H1 (cell line): ENCODE measurements at regions of chr17 and their contacts with region 1.

Region 1: DNA sequence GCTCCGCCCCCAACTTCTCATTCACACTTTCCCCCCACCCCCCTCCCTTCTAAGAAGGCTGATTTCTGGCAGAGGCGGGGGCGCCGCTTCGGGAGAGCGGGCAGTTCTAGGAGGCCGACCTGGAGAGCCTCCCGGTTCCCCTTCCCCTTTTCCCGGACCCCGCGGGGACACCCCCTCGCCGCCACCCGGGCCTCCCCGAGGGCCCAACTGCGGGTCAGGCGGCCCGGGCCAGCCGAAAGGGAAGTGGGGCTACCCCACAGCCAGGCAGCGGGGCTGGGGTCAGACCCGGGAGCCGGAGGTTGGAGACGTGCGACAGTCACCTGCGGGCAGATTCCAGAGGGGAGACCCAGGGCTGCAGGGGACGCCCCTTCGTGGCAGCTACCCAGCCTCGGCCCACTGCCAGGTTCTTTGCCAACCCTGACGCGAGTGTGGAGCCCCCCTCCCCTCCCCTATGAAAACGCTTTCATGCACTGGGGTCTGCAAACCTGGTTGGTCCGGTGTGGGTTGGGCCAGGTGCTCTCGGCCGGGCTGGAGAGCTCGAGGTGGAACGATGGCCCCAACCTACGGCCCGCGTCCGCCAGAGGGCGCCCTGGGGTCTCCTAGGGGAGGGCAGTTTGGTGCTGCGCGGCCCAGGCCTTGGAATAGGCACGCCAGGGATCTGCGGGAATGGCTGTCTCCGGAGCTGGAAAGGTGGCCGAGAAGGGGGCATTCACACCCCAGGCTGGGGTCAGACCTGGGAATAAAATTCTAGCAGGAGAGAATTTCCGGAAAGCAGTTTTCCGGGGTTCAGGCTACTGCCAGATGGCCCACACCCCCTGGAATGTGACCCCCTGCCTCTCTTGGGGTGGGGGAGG is 721 bp upstream of the SOCS3 start:
- DNase-seq: peak; percentile 73 to 100
- H3K4me3 ChIP-seq: peak overlapping the region; percentile 58 to 81 (median 65)
- H3K27ac ChIP-seq: peak overlapping the region; percentile 25; the same call in 1 of the 2 replicates
- H3K4me1 ChIP-seq: peaks cover 16 to 53% (median 41%) of the 10 kb centered on the region in 4 experiments
- H3K27me3 ChIP-seq: peaks cover 0 to 18% (median 5%) of the 10 kb centered on the region in 4 experiments; a peak in 4 of 7 replicates
- CTCF ChIP-seq: peak; percentile 90 to 98 (median 92)
- EP300 ChIP-seq: peak in 1 of 2 experiments; percentile 35; a peak in 1 of 3 replicates
- POLR2A ChIP-seq: no peak
- RAD21 ChIP-seq: peak; percentile 79 to 89

Region 2: GRCh38 chr17:78313735-78314648 is 46.6 kb before region 1 on chr17:
- CTCF ChIA-PET with region 1: interaction called, 11 read pairs
- POLR2A ChIA-PET with region 1: interaction called, 28 read pairs
- DNase-seq: peak; percentile 77 to 88
- H3K4me3 ChIP-seq: peak overlapping the region; percentile 26 to 67 (median 44)
- H3K27ac ChIP-seq: no peak overlapping the region
- H3K4me1 ChIP-seq: peaks cover 8 to 38% (median 32%) of the 10 kb centered on the region in 4 experiments
- H3K27me3 ChIP-seq: peaks cover 0 to 3% (median 0%) of the 10 kb centered on the region in 4 experiments; a peak in 2 of 7 replicates
- CTCF ChIP-seq: no peak
- EP300 ChIP-seq: no peak
- POLR2A ChIP-seq: no peak; a peak in 1 of 3 replicates
- RAD21 ChIP-seq: no peak

Region 3: GRCh38 chr17:78341559-78342448 is 18.8 kb before region 1 on chr17:
- CTCF ChIA-PET with region 1: interaction called, 10 read pairs
- POLR2A ChIA-PET with region 1: interaction called, 29 read pairs
- DNase-seq: peak in 1 of 2 experiments; percentile 80
- H3K4me3 ChIP-seq: peak overlapping the region; percentile 29 to 61 (median 32); a peak in 6 of 8 replicates
- H3K27ac ChIP-seq: no peak overlapping the region
- H3K4me1 ChIP-seq: peaks cover 0 to 17% (median 14%) of the 10 kb centered on the region in 4 experiments; a peak in 5 of 7 replicates
- H3K27me3 ChIP-seq: peaks cover 0 to 23% (median 13%) of the 10 kb centered on the region in 4 experiments; a peak in 5 of 7 replicates
- CTCF ChIP-seq: no peak
- EP300 ChIP-seq: no peak
- POLR2A ChIP-seq: no peak
- RAD21 ChIP-seq: no peak

Region 4: GRCh38 chr17:78412403-78412802 is 51.8 kb after region 1 on chr17:
- CTCF ChIA-PET with region 1: interaction called, 257 read pairs
- POLR2A ChIA-PET with region 1: interaction called, 6 read pairs
- DNase-seq: no peak
- H3K4me3 ChIP-seq: no peak overlapping the region
- H3K27ac ChIP-seq: no peak overlapping the region
- H3K4me1 ChIP-seq: peaks cover 0 to 16% (median 7%) of the 10 kb centered on the region in 4 experiments; a peak in 5 of 7 replicates
- H3K27me3 ChIP-seq: no peaks in the 10 kb centered on the region
- CTCF ChIP-seq: peak; percentile 33 to 74 (median 68)
- EP300 ChIP-seq: no peak
- POLR2A ChIP-seq: no peak
- RAD21 ChIP-seq: peak; percentile 15 to 43; a peak in 3 of 4 replicates

Region 5: DNA sequence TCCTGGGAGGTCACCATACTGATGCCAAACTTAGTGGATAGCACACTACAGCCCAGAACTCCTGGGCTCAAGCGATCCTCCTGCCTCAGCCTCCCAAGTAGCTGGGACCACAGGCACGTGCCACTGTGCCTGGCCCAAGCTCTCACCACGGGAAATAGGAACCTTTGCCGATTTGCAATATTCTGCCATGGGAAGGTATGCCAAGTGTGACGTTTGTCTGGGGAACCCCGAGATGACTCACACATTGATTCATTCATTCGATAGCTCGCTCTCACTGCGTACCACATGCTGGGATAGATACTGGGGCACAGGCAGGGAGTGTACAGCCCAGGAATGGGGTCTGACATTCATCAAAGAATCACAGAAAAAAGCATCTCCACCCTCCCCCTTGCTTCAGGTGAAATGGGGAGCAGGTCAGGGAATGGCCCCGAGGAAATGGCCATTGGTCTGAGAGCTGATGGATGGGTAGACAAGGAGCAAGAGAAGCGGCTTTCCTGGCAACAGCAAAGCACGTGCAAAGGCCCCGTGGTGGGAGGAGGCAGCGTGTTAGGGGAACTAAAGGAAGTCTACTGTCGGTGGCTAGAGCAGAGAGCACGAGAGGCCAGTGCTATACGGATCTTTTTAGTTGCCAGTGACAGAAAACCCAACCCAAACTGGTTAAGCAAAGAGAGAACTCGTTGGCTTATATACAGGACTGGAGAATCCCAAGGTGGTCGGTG is 172.5 kb after region 1 on chr17:
- CTCF ChIA-PET with region 1: no interaction called
- POLR2A ChIA-PET with region 1: no interaction called
- DNase-seq: no peak
- H3K4me3 ChIP-seq: no peak overlapping the region
- H3K27ac ChIP-seq: no peak overlapping the region
- H3K4me1 ChIP-seq: no peaks in the 10 kb centered on the region
- H3K27me3 ChIP-seq: no peaks in the 10 kb centered on the region
- CTCF ChIP-seq: no peak
- EP300 ChIP-seq: no peak
- POLR2A ChIP-seq: no peak
- RAD21 ChIP-seq: no peak